OCI-LY7 (cell line): ENCODE measurements at regions of chr1 and their contacts with region 1.

Region 1: DNA sequence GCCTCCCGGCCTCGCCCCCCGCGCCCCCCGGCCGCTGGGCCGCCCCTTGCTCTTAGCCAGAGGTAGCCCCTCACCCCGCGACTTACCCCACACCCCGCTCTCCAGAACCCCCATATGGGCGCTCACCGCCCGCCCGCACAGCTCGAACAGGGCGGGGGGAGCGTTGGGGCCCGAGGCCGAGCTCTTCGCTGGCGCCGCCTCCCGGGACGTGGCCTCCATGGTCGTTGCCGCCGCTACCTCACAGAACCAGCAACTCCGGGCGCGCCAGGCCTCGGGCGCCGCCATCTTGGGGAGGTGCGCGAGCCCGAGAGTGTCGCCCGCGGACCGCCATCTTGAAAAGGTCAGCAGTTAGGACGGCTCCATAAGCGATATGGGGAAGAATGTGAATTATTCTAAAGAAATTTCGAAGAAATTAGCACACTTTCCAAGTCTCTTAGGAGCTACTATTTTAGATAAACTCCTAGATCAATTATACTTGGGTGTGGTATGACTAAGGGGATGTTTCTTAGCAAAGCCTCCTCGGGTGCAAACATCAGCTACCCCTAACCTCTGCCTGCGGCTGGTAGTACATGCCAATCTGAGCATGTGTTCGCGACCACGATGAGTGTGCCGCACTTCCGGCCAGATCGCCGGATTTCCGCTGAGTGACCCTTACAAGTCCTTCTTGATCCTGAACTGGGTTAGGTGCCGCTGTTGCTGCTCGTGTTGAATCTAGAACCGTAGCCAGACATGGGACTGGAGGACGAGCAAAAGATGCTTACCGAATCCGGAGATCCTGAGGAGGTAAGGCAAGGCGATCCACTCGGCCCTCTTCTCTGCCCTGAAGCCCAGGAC is at the starts of genes LRRC41 and UQCRH:
- DNase-seq: peak; percentile 97
- H3K4me3 ChIP-seq: peak within 1 kb of the TSS; percentile 95
- H3K27ac ChIP-seq: peak within 1 kb of the TSS; percentile 76
- H3K4me1 ChIP-seq: peaks cover 40% of the 10 kb centered on the region
- CTCF ChIP-seq: 0 out of 2 replicates have a peak, but pooled peaks have one; percentile 22
- total RNA-seq, gene LRRC41: 24.1 and 36.8 TPM in 2 replicates
- total RNA-seq, gene UQCRH: 693 and 1,106 TPM in 2 replicates

Region 2: DNA sequence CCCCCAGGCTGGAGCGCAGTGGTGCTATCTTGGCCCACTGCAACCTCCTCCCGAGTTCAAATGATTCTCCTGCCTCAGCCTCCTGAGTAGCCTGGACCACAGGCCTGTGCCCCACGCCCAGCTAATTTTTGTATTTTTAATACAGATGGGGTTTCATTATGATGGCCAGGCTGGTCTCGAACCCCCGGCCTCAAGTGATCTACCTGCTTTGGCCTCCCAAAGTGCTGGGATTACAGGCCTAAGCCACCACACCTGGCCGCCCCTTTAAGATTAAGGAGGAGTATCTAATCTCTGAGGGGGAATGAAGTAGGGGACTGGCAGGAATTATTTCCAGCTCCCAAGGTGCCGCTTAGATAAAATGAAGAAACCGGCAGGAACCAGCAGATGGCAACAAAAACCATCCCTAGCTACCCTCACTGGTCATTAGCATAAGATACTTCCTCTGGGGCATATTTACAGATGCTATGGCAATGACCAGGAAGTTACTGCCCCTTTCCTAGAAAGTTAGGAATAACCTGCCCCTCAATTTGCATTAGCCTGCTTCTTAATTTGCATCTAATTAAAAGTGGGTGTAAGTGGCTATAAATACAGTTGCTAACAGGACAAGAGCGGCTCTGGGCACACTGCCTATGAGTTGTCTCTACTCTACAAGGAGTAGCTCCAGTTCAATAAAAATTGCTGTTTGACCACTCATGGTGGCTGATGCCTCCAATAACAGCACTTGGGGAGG is 30.2 kb after region 1 on chr1:
- CTCF ChIA-PET with region 1: interaction called, 10 read pairs
- POLR2A ChIA-PET with region 1: interaction called, 34 read pairs
- intact Hi-C with region 1: loop called (anchors 2 kb)
- DNase-seq: peak; percentile 88
- H3K4me3 ChIP-seq: peak overlapping the region; percentile 51
- H3K27ac ChIP-seq: peak overlapping the region; percentile 79
- H3K4me1 ChIP-seq: peaks cover 39% of the 10 kb centered on the region
- CTCF ChIP-seq: peak; percentile 85

Region 3: DNA sequence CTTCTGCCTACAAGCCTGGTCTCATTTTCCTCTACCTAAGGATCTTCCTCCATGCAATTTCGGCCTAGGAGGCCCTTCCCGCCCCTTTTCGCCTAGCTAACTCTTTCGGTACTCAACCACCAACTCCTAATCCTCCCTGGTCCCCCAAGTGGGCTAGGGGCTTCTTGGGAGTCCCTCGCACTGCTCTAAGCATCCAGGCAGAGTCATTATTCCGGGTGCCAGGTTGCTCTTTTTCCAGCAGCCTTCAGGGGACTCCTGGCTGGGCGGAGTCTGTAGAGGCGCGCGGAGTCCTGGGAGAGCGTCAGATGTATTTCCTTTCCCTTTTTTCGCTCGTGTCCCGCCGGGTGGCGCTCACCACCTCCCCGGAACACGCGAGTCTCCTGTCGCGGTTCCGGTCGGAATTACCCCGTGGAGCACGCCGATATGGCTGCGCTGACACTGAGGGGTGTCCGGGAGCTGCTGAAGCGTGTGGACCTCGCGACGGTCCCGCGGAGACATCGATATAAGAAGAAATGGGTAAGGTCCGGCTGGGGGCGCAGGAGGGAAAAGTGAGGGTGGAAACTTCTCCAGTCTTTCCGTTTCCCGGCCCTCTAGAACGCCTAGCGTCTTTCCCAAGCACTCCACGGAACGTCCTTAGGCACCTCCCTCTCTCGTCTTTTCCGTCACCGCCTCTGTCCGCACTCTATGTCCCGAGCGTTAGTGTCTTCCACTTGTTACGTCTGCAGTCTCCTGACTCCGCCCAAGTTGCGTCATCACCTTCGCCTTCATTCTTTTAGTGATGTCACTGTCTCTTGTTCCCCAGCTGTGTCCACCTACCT is 37.4 kb after region 1 on chr1 and contains the start of gene NSUN4:
- CTCF ChIA-PET with region 1: interaction called, 4 read pairs
- POLR2A ChIA-PET with region 1: interaction called, 7 read pairs
- intact Hi-C with region 1: loop called (anchors 2 kb)
- DNase-seq: peak; percentile 92
- H3K4me3 ChIP-seq: peak within 1 kb of the TSS; percentile 80
- H3K27ac ChIP-seq: peak within 1 kb of the TSS; percentile 61
- H3K4me1 ChIP-seq: peaks cover 22% of the 10 kb centered on the region
- CTCF ChIP-seq: peak; percentile 85
- total RNA-seq, gene NSUN4: 13.2 and 26.6 TPM in 2 replicates